ENCODE measurements at regions of chr5 and their contacts with region 1.

Region 1: DNA sequence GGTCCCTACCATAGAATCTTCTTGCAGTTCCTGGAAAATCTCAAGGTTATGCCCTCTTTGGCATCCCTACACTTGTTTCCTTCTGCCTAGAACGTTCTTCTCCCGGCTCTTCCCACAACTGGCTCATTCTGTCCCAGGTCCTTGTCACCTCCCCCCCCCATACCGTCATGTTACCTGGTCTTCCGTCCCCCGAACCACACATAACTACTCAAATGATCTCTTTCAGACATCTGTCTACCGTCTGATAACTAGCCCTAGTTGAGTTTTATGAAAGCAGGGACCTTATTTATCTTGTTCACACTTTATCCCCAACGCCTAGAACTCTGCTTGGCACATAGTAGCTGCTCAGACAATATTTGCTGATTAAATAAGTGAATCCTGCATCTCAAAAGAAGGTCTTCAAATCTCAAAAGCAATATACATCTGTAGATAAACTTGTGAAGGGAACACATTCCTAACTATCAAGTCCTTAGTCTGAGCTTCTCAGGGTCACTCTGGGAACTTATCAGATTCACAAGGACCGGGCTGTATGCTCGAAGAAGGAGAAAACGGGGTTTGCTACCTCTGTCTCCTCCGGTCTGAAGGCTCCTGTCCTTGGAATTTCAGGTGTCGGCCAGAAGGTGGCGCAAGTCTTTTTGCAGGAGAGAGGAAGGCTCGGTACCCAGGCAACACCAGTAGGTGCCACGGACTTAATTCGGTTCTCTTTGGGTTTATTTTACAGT is 30.0 kb downstream of the LCP2 start:
- DNase-seq: peak; percentile 89
- ATAC-seq: peak; percentile 59
- H3K4me3 Mint-ChIP-seq: peak overlapping the region; percentile 62
- H3K27ac Mint-ChIP-seq: peak overlapping the region; percentile 90
- H3K4me1 Mint-ChIP-seq: peaks cover 97% of the 10 kb centered on the region
- H3K27me3 Mint-ChIP-seq: no peaks in the 10 kb centered on the region

Region 2: GRCh38 chr5:170200876-170201275 is 66.7 kb before region 1 on chr5:
- CTCF ChIA-PET with region 1: no interaction called
- POLR2A ChIA-PET with region 1: no interaction called
- DNase-seq: no peak
- ATAC-seq: no peak
- H3K4me3 Mint-ChIP-seq: no peak overlapping the region
- H3K27ac Mint-ChIP-seq: no peak overlapping the region
- H3K4me1 Mint-ChIP-seq: no peaks in the 10 kb centered on the region
- H3K27me3 Mint-ChIP-seq: peaks cover 14% of the 10 kb centered on the region

Region 3: GRCh38 chr5:170256571-170256970 is 11.0 kb before region 1 on chr5:
- CTCF ChIA-PET with region 1: interaction called, 30 read pairs
- POLR2A ChIA-PET with region 1: interaction called, 9 read pairs
- DNase-seq: no peak
- ATAC-seq: no peak
- H3K4me3 Mint-ChIP-seq: no peak overlapping the region
- H3K27ac Mint-ChIP-seq: peak overlapping the region; percentile 83
- H3K4me1 Mint-ChIP-seq: peaks cover 92% of the 10 kb centered on the region
- H3K27me3 Mint-ChIP-seq: no peaks in the 10 kb centered on the region

Region 4: DNA sequence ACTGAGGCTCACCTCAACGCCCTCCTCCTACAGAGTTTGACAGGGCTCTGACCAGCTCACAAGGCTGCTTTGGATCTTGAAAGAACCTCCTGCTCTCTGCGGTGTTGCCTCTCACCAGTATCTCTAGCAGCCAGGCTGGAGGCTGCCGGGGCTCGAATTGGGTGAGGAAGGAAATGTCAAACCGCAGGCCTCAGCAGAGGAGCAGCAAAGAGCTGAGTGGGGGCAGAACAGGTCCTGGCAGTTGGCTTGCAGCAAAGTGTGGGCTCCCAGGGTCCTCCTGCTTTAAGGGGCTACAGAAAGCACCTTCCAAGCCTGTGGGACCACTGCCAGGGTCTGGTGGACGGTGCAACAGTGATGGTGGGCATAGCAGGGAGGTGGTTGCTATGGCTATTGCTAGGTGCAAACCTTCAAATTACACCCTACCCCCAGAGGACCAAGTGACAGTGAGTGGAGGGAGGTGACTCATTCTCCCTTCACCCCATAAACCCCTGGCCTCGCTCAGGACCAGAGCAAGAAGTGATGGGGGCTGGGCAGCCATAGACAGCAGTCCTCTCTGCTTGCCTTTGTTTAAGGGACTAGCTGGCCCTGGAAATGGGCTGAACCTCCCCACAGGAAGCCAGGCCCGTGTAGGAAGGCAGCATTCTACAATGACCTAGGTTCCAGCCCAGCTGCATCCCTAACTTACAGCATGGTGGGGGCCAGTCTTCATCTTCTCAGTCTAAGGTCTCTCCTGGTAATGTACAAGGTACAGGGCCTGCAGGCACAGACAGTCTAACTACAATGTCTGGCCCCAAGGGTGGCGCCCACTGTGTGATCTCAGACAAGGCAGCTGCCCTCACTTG is 11.2 kb after region 1 on chr5:
- CTCF ChIA-PET with region 1: interaction called, 107 read pairs
- POLR2A ChIA-PET with region 1: interaction called, 79 read pairs
- DNase-seq: peak; percentile 97
- ATAC-seq: peak; percentile 77
- H3K4me3 Mint-ChIP-seq: peak overlapping the region; percentile 72
- H3K27ac Mint-ChIP-seq: peak overlapping the region; percentile 94
- H3K4me1 Mint-ChIP-seq: peaks cover 94% of the 10 kb centered on the region
- H3K27me3 Mint-ChIP-seq: no peaks in the 10 kb centered on the region

Region 5: GRCh38 chr5:170287532-170287931 is 19.9 kb after region 1 on chr5:
- CTCF ChIA-PET with region 1: interaction called, 324 read pairs
- POLR2A ChIA-PET with region 1: interaction called, 898 read pairs
- DNase-seq: no peak
- ATAC-seq: peak; percentile 12
- H3K4me3 Mint-ChIP-seq: peak overlapping the region; percentile 55
- H3K27ac Mint-ChIP-seq: peak overlapping the region; percentile 85
- H3K4me1 Mint-ChIP-seq: peaks cover 100% of the 10 kb centered on the region
- H3K27me3 Mint-ChIP-seq: no peaks in the 10 kb centered on the region

Region 6: DNA sequence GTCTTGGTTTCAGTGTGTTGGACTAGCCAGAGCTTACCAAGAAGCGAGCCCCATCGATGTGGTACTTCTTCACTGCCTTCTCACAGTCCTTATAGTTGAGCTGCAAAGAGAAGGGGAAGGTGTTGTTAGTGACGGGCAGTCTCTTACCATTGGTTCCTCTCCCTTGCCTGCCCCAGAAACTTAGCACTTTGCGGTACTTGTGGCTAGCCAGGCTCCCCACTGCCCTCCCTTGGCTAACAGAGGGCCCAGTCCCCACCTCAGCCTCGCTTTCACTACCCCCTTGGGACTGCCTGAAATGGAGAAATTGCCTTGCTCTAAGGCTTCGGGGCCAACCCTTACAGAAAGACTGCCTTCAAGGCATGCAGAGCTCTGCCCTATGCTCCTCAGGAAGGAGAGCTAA is 25.7 kb after region 1 on chr5:
- CTCF ChIA-PET with region 1: interaction called, 324 read pairs
- POLR2A ChIA-PET with region 1: interaction called, 898 read pairs
- DNase-seq: peak; percentile 92
- ATAC-seq: peak; percentile 61
- H3K4me3 Mint-ChIP-seq: peak overlapping the region; percentile 96
- H3K27ac Mint-ChIP-seq: peak overlapping the region; percentile 93
- H3K4me1 Mint-ChIP-seq: peaks cover 64% of the 10 kb centered on the region
- H3K27me3 Mint-ChIP-seq: no peaks in the 10 kb centered on the region

Region 7: DNA sequence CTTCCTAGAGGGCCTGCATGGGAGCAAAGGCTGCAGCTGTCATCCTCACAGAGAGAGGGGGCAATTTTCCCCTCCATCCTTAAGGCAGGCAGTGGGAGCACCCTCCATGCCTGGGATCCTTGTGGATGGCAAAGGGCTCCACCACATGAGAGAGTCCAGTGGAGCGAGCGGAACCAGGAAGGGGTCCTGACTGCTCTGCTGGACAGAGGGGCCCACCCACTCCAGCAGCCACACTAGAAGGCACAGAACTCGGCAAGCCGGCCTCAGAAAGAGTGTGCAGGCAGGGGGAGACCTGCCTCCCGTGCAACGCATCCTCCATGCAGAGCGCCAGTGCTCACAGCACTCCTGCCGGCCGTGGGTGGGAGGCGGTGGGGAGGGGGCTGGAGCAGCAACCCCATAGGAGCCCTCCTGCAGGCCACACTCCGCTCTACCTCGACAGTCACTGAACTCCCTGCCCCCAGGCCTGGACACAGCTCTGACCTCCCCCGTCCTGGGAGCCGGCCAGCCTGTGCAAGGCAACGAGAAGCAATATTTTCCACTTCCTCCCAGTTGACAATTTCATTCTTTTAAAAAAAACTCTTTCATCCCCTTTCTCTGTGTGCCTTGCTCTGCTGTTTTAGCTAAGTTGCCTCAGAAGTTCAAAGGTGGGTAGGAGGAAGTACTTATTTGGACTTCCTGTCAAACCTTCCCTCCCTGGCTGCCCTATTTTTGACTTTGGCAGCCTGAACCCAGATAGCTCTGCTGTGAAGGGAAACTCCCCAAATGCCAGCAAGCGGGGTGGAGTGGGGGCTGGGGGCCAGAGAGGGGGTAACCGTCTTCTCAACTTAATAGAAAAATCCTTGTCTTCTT is 35.3 kb after region 1 on chr5:
- CTCF ChIA-PET with region 1: interaction called, 324 read pairs
- POLR2A ChIA-PET with region 1: interaction called, 898 read pairs
- DNase-seq: peak; percentile 77
- ATAC-seq: peak; percentile 95
- H3K4me3 Mint-ChIP-seq: peak overlapping the region; percentile 80
- H3K27ac Mint-ChIP-seq: peak overlapping the region; percentile 96
- H3K4me1 Mint-ChIP-seq: peaks cover 76% of the 10 kb centered on the region
- H3K27me3 Mint-ChIP-seq: no peaks in the 10 kb centered on the region

Region 8: GRCh38 chr5:170368586-170368985 is 101.0 kb after region 1 on chr5:
- CTCF ChIA-PET with region 1: no interaction called
- POLR2A ChIA-PET with region 1: no interaction called
- DNase-seq: no peak
- ATAC-seq: no peak
- H3K4me3 Mint-ChIP-seq: no peak overlapping the region
- H3K27ac Mint-ChIP-seq: peak overlapping the region; percentile 26
- H3K4me1 Mint-ChIP-seq: no peaks in the 10 kb centered on the region
- H3K27me3 Mint-ChIP-seq: peaks cover 19% of the 10 kb centered on the region

Region 9: DNA sequence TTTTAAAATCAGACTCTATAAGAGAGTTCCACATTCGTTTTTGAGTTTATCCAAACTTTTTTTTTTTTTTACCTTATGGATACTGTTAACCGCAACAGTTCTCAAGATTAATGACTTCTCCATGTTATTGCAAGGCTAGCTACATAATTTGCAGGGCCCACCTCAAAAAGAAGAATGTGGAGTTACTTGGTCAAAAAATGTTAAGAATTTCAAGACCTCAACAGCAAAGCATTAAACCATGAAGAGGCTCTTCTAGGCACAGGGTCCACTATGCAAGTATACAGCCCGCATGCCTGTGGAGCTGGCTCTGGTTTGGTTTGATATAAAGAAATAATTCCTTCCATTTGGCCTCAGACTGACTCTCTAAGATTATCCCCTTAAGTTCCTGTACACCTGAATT is 908.2 kb after region 1 on chr5:
- CTCF ChIA-PET with region 1: no interaction called
- POLR2A ChIA-PET with region 1: no interaction called
- DNase-seq: no peak
- ATAC-seq: no peak
- H3K4me3 Mint-ChIP-seq: no peak overlapping the region
- H3K27ac Mint-ChIP-seq: no peak overlapping the region
- H3K4me1 Mint-ChIP-seq: no peaks in the 10 kb centered on the region
- H3K27me3 Mint-ChIP-seq: peaks cover 5% of the 10 kb centered on the region

Measured in activated CD8-positive, alpha-beta T cell treated with anti-CD3 and anti-CD28 coated beads, Interleukin-2, amount 10 ng/mL, durations not matched to agents 7 days and 5 days (primary cell).